HepG2 (cell line): ENCODE measurements at regions of chr22 and their contacts with region 1.

Region 1: DNA sequence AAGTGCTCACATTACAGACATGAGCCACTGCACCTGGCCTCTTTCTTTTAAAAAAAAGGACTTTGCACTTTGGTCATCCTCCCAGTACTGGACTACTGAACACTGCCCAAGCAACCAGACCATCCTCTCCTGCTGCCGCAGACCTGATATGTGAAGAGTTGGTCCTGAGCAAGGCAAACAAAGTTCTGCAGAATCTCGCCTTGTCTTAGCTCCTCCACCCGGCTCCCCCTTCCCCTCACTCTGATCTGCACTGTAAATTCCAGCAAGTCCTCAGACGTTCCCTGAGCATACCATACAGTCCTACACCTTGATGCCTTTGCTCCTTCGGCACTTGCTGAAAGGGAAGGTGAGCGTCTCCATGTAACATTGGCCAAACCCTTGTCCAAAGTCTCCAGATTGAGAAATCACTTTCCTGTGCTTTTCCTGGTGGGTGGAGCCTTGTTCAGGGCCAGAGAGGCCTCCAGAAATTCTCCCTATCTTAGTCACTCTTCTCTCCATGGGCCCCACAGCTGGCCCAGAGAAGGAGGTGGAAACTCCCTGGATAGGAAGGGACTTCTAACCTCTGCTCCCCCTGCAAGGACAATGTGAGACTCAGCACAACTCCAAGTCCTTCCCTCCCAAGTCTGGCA is 47.0 kb upstream of the TIMP3 start:
- DNase-seq: peak; percentile 83
- ATAC-seq: peak; percentile 84
- H3K4me3 ChIP-seq: peak overlapping the region in 1 of 3 experiments; percentile 49; a peak in 1 of 6 replicates
- H3K27ac ChIP-seq: peak overlapping the region; percentile 72
- H3K4me1 ChIP-seq: peaks cover 75% of the 10 kb centered on the region
- H3K27me3 ChIP-seq: no peaks in the 10 kb centered on the region
- CTCF ChIP-seq: 0 out of 2 replicates have a peak, but pooled peaks have one; percentile 0
- EP300 ChIP-seq: peak in 1 of 2 experiments; percentile 64; a peak in 1 of 4 replicates
- POLR2A ChIP-seq: no peak
- RAD21 ChIP-seq: no peak

Region 2: GRCh38 chr22:32771756-32772155 is 17.2 kb after region 1 on chr22:
- CTCF ChIA-PET with region 1: no interaction called
- POLR2A ChIA-PET with region 1: no interaction called
- in situ Hi-C with region 1: no loop called
- intact Hi-C with region 1: no loop called
- DNase-seq: no peak
- ATAC-seq: no peak
- H3K4me3 ChIP-seq: no peak overlapping the region
- H3K27ac ChIP-seq: no peak overlapping the region
- H3K4me1 ChIP-seq: peaks cover 14% of the 10 kb centered on the region
- H3K27me3 ChIP-seq: no peaks in the 10 kb centered on the region; a peak in 1 of 5 replicates
- CTCF ChIP-seq: no peak
- EP300 ChIP-seq: no peak
- POLR2A ChIP-seq: no peak
- RAD21 ChIP-seq: no peak

Region 3: GRCh38 chr22:32788909-32789624 is 34.5 kb after region 1 on chr22:
- CTCF ChIA-PET with region 1: no interaction called
- POLR2A ChIA-PET with region 1: no interaction called
- in situ Hi-C with region 1: no loop called
- intact Hi-C with region 1: loop called (anchors 5 kb)
- DNase-seq: peak; percentile 74
- ATAC-seq: peak; percentile 68
- H3K4me3 ChIP-seq: no peak overlapping the region
- H3K27ac ChIP-seq: peak overlapping the region; percentile 70
- H3K4me1 ChIP-seq: peaks cover 97% of the 10 kb centered on the region
- H3K27me3 ChIP-seq: no peaks in the 10 kb centered on the region
- CTCF ChIP-seq: no peak
- EP300 ChIP-seq: peak in 1 of 2 experiments; percentile 55; a peak in 1 of 4 replicates
- POLR2A ChIP-seq: no peak
- RAD21 ChIP-seq: no peak